Activated T-helper 1 cell treated with anti-CD3 and anti-CD28 coated beads, Interleukin-12 subunit alpha, Interleukin-12 subunit beta, Interleukin-2, Interleukin-4 antibody, amounts not matched to agents 30 ng/mL and 10 ng/mL and 1 ng/mL, durations not matched to agents 14 hours and 24 hours and 36 hours (primary cell): ENCODE measurements at regions of chr12 and their contacts with region 1.

Region 1: GRCh38 chr12:67355578-67356379 is 86.6 kb downstream of the CAND1 start:
- DNase-seq: no peak
- H3K4me3 Mint-ChIP-seq: no peak overlapping the region
- H3K27ac Mint-ChIP-seq: no peak overlapping the region
- H3K4me1 Mint-ChIP-seq: peaks cover 23% of the 10 kb centered on the region
- H3K27me3 Mint-ChIP-seq: no peaks in the 10 kb centered on the region

Region 2: GRCh38 chr12:67111182-67111581 is 244.6 kb before region 1 on chr12:
- intact Hi-C with region 1: no loop called
- DNase-seq: no peak
- H3K4me3 Mint-ChIP-seq: no peak overlapping the region
- H3K27ac Mint-ChIP-seq: no peak overlapping the region
- H3K4me1 Mint-ChIP-seq: no peaks in the 10 kb centered on the region
- H3K27me3 Mint-ChIP-seq: peaks cover 3% of the 10 kb centered on the region

Region 3: GRCh38 chr12:67441736-67442346 is 86.1 kb after region 1 on chr12:
- intact Hi-C with region 1: loop called (anchors 1 kb)
- DNase-seq: peak; percentile 61
- H3K4me3 Mint-ChIP-seq: no peak overlapping the region
- H3K27ac Mint-ChIP-seq: no peak overlapping the region
- H3K4me1 Mint-ChIP-seq: peaks cover 15% of the 10 kb centered on the region
- H3K27me3 Mint-ChIP-seq: peaks cover 7% of the 10 kb centered on the region

Region 4: DNA sequence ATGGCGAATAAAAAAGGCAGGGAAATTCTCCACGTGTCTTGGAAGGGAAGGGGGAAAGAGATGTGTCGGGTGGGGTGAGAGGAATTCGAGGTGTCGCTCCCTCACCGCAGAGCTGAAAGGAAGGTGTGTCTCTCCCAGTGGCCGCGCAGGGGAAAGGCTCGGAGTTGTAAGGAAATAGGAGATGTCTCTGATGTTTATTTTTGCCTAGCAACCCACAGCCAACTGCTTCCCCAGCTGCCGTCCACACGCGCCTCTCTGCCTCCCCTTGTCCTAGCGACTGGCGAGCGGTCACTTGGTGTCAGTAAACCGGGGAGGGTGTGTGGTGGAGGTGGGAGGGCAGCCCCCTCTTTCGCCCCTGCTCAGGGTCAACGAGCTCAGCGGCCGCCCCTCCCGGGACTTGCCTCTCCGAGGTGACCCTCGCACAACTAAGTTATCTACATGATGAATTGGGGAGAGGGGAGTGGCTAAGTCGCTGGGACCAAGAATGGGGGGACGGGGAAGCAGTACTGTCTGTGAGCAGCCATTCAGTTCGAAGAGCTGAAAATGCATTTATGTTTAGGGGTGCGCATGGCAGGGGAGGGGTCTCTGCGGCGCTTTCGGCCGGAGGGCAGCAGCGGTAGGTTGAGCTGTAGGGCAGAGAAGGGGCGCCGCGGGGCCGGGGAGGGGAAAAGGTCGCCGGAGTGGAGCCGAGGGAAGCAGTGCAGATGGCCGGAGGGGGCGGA is 292.2 kb after region 1 on chr12:
- intact Hi-C with region 1: loop called (anchors 2 kb)
- DNase-seq: peak; percentile 17
- H3K4me3 Mint-ChIP-seq: peak overlapping the region; percentile 83
- H3K27ac Mint-ChIP-seq: peak overlapping the region; percentile 89
- H3K4me1 Mint-ChIP-seq: peaks cover 36% of the 10 kb centered on the region
- H3K27me3 Mint-ChIP-seq: peaks cover 3% of the 10 kb centered on the region

Region 5: GRCh38 chr12:67943226-67943892 is 587.6 kb after region 1 on chr12:
- intact Hi-C with region 1: loop called (anchors 1 kb)
- DNase-seq: peak; percentile 27
- H3K4me3 Mint-ChIP-seq: no peak overlapping the region
- H3K27ac Mint-ChIP-seq: no peak overlapping the region
- H3K4me1 Mint-ChIP-seq: peaks cover 5% of the 10 kb centered on the region
- H3K27me3 Mint-ChIP-seq: peaks cover 6% of the 10 kb centered on the region

Region 6: DNA sequence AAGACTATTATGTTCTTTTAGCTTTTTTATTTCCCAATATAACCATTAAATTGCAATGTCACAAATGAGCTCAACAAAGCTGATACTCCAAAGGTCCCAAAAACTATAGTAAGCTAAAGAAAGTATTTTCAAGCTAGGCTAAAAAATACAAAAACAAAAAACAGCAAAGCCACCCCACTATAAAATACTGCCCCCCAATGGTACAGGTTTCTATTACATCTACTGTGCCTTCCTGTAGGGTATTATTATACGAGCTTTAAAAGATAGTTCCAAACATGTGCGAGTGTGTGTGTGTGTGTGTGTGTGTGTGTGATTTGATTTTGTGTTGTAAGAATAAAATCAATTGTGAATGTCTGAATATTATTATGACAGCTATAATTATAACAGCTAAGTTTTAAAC is 802.7 kb after region 1 on chr12:
- intact Hi-C with region 1: loop called (anchors 5 kb)
- DNase-seq: no peak
- H3K4me3 Mint-ChIP-seq: peak overlapping the region; percentile 91
- H3K27ac Mint-ChIP-seq: peak overlapping the region; percentile 87
- H3K4me1 Mint-ChIP-seq: peaks cover 65% of the 10 kb centered on the region
- H3K27me3 Mint-ChIP-seq: no peaks in the 10 kb centered on the region

Region 7: GRCh38 chr12:68317047-68317667 is 961.4 kb after region 1 on chr12:
- intact Hi-C with region 1: loop called (anchors 1 kb)
- DNase-seq: no peak
- H3K4me3 Mint-ChIP-seq: no peak overlapping the region
- H3K27ac Mint-ChIP-seq: no peak overlapping the region
- H3K4me1 Mint-ChIP-seq: peaks cover 17% of the 10 kb centered on the region
- H3K27me3 Mint-ChIP-seq: no peaks in the 10 kb centered on the region